ENCODE measurements at regions of chr7 and their contacts with region 1.

Region 1: DNA sequence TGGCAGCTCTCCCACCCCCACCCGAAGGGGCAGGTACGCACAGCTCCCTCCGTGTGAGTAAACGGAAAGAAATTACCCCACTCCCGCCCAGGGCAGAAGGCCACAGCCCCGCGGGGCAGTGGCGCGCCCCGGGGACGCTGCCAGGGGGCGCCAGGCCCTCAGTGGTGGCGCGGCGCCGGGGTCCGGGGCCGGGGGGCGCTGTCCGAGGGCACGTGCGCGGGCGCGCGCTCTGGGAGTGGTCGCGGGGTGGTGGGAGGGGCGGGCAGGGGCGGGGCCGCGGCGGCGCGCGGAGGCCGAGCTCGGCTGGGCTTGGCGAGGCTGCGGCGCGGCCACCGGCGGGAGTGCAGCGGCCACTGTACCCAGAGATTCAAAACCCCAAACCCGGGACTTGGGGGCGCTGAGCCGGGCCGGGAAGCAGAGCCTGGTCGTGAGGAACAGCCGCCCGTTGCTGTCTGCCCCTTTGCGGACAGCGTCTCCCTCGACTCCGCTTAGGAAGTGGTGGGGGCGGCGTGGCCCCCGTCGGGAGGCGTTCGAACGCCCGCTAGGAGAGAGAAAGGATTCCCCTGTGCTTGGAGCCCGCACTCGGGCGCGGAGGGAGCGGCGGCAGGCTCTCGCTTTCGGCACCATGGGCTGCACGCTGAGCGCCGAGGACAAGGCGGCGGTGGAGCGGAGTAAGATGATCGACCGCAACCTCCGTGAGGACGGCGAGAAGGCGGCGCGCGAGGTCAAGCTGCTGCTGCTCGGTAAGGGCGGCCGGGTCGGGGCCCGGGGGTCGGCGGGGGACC is at the start of gene GNAI1:
- DNase-seq: peak; percentile 65 to 93 (median 89)
- H3K4me3 ChIP-seq: peak within 1 kb of the TSS; percentile 59 to 100 (median 90)
- H3K27ac ChIP-seq: peak within 1 kb of the TSS; percentile 71 to 94 (median 92)
- H3K4me1 ChIP-seq: peaks cover 18 to 32% of the 10 kb centered on the region in 2 donors
- H3K27me3 ChIP-seq: no peaks in the 10 kb centered on the region
- CTCF ChIP-seq: peak in 4 of 6 experiments; percentile 28 to 56 (median 46)
- POLR2A ChIP-seq: peak; percentile 42 to 80
- total RNA-seq, gene GNAI1: 36.9 to 125 (median 72.5) TPM

Region 2: DNA sequence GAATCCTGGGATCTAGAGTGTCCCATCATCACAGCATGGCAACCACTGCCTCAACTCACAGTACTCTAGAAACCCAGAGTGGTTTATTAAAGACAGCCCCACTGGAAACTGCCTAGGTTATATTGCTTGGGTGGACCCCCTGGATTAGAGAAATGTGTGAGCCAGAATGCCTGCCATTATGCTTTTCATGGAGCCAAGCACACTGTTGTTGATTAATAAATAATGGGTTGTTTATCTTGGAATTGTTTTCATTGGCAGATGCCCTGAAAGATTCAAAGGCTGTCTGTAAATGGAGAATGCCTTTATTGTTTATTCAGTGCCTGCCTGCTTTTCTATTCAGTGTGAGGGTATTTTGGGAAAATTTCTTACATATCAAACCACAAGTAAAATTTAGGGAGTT is 52.0 kb after region 1 on chr7:
- intact Hi-C with region 1: loop called in 1 of 2 experiments (anchors 10 kb)
- DNase-seq: no peak
- H3K4me3 ChIP-seq: no peak overlapping the region
- H3K27ac ChIP-seq: no peak overlapping the region
- H3K4me1 ChIP-seq: peaks cover 8 to 22% of the 10 kb centered on the region in 2 donors
- H3K27me3 ChIP-seq: no peaks in the 10 kb centered on the region
- CTCF ChIP-seq: no peak
- POLR2A ChIP-seq: no peak

Region 3: GRCh38 chr7:80225361-80225760 is 90.6 kb after region 1 on chr7:
- intact Hi-C with region 1: loop called in 1 of 2 experiments (anchors 10 kb)
- DNase-seq: no peak
- H3K4me3 ChIP-seq: no peak overlapping the region
- H3K27ac ChIP-seq: no peak overlapping the region
- H3K4me1 ChIP-seq: peaks cover 0 to 19% of the 10 kb centered on the region in 2 donors
- H3K27me3 ChIP-seq: no peaks in the 10 kb centered on the region
- CTCF ChIP-seq: no peak
- POLR2A ChIP-seq: no peak

Region 4: DNA sequence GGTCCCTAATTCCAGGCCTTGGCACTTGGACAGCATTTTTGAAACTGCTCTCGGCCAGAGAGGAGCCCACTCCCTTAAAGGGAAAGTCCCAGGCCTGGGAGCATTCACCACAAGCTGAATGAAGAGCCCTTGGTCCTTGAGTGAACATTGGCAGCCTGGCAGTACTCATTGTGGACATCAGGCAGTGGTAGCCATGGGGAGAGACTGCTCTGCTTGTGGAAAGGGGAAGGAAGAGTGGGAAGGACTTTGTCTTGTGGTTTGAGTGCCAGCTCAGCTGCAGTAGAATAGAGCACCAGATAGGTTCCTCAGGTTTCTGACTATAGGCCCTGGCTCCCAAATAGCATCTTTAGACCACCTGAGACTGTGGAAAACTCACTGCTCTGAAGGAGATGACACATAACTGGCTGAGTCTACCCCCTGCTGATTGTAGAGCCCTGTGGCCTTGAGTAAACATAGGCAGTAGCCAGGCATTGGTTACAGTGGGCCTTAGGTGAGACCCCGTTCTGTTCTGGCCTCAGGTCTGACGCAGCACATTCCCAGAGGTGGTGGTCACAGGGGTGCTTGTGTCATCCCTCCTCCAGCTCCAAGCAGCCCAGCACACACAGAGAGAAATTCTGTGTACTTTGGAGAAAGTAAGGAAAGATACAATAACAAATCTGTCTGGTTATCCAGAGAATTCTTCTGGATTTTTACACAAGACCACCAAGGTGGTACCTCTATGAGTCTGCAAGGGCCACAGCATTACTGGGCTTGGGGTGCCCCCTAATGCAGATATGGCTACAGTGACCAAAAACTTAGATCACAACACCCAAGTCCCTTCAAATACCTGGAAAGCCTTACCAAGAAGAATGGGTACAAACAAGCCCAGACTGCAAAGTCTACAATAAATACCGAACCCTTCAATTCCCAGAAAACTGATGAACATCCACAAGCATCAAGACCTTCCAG is 153.7 kb after region 1 on chr7:
- intact Hi-C with region 1: loop called in 1 of 2 experiments (anchors 10 kb)
- DNase-seq: peak in 1 of 7 donors; percentile 7
- H3K4me3 ChIP-seq: no peak overlapping the region
- H3K27ac ChIP-seq: no peak overlapping the region
- H3K4me1 ChIP-seq: no peaks in the 10 kb centered on the region
- H3K27me3 ChIP-seq: no peaks in the 10 kb centered on the region
- CTCF ChIP-seq: peak in 2 of 6 experiments; percentile 23 to 24
- POLR2A ChIP-seq: no peak

Region 5: DNA sequence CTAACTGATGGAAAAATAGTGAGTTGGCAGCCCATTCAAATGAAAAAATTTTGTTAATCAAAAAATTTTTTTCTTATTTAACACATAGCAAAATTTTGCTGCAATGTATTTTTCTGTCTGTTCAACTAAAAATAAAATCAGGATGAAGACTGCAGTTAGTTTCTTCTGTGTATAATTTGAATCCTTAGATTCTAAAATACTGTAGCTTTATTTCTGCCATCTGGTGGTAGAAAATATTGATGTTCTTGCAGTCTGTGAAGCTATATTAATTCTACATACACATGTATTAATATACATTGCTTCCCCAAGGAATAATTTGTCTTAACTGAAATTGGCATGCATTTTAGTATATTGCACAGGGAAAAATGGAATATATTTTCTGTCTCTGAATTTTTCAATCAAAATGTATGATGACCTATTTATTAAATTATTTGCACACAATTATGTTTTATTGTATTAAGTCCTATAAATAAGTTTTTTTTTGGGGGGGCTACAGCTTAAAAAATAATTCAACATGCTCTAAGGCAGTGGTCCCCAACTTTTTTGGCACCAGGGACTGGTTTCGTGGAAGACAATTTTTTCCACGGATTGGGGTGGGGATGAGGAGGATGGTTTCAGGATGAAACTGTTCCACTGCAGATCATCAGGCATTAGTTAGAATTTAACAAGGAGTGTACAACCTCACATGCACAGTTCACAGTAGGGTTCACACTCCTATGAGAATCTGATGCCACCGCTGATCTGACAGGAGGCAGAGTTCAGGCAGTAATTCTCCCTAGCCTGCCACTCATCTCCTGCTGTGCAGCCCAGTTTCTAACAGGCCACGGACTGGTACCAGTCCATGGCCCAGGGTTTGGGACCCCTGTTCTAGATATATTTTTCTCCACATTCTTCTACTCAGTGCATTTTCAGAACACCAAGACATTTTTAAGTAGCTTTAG is 257.8 kb after region 1 on chr7:
- intact Hi-C with region 1: loop called in 1 of 2 experiments (anchors 10 kb)
- DNase-seq: no peak
- H3K4me3 ChIP-seq: no peak overlapping the region
- H3K27ac ChIP-seq: no peak overlapping the region
- H3K4me1 ChIP-seq: peaks cover 0 to 3% of the 10 kb centered on the region in 2 donors
- H3K27me3 ChIP-seq: no peaks in the 10 kb centered on the region
- CTCF ChIP-seq: peak; percentile 40 to 81 (median 68)
- POLR2A ChIP-seq: no peak

Region 6: DNA sequence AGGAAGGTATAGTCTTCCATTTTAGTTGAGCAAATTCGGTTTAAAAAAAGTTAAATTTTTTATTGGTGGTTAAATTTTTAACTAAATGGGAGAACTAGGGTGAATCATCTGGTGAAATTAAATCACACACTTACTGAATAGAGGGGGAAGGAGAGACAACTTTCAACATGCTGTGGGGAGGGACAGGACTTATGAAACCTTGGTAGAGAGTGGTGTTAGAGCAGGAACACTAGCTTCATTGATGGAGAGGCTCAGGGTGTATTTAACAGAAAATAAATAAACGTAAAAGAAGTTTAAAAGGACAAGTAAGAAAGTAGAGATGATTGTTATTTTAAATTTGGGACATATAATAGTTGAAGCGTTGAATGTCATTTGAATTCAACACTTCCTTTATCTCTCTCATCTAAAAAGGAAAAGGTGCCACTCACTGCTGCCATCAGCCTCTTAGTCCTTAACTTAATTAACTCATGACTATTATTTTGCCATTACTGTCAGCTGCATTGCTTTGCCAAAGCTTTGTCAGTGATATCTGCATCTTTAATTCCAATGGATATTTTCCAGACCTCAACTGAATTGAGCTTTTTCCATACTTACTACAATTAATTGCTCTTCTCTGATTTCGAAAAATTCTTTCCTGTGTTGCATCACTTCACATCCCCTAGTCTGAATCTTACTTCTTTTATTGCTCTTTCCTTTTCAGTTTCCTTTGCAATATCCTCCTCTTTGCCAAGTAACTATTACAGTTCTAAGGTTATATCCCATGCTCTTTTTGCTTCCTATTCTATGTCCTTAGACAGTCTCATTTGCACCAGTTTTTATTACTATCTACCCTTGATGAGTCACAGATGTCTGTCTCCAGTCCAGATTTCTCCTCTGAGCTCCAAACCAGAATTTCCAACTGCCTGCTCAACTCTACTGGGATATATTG is 305.4 kb after region 1 on chr7:
- intact Hi-C with region 1: no loop called
- DNase-seq: peak in 1 of 7 donors; percentile 16
- H3K4me3 ChIP-seq: no peak overlapping the region
- H3K27ac ChIP-seq: no peak overlapping the region
- H3K4me1 ChIP-seq: peaks cover 0 to 11% of the 10 kb centered on the region in 2 donors
- H3K27me3 ChIP-seq: no peaks in the 10 kb centered on the region
- CTCF ChIP-seq: no peak
- POLR2A ChIP-seq: no peak

Measured in adrenal gland (tissue), 19 donors.